ENCODE measurements at regions of chr19 and their contacts with region 1.

Region 1: DNA sequence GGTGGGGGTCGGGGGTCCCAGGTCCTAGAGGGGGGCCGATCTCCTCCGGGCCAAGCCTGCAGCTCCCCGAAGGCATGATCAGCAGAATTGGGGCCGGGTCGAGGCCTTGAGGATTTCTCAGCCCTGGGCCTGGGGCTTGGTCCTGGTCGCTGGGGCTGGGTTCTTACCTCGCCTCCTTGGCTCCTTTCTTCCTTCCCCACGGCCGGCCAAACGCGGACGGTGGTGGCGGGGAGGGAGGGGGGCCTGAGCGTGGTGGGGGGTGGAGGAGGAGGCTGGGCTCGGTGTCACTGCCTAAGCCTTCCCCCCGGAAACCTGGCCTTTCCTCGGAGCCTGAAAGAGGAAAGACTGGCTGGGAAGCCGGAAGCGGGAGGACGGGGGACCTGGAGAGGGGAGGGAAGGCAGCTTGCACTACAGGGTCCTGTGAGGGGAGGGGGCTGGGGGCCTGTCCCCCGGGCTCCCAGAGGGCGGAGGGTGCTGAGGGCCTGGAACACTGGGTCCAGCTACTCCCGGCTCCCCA is at the start of gene ZNF579:
- DNase-seq: peak; percentile 75 to 85
- ATAC-seq: peak; percentile 81 to 86
- H3K4me3 ChIP-seq: peak within 1 kb of the TSS; percentile 92 to 98 (median 96)
- H3K27ac ChIP-seq: peak within 1 kb of the TSS; percentile 96 to 100 (median 98)
- H3K4me1 ChIP-seq: peaks cover 3 to 19% of the 10 kb centered on the region in 2 donors
- H3K27me3 ChIP-seq: peaks cover 0 to 3% (median 0%) of the 10 kb centered on the region in 3 donors
- CTCF ChIP-seq: no peak
- POLR2A ChIP-seq: no peak
- total RNA-seq, gene ZNF579: 15.0 to 19.3 (median 16.8) TPM

Region 2: GRCh38 chr19:55563261-55563690 is 17.4 kb before region 1 on chr19:
- in situ Hi-C with region 1: no loop called
- intact Hi-C with region 1: loop called (anchors 1 kb)
- DNase-seq: peak; percentile 64 to 83
- ATAC-seq: peak; percentile 95 to 97
- H3K4me3 ChIP-seq: peak overlapping the region in 1 of 4 donors; percentile 16
- H3K27ac ChIP-seq: peak overlapping the region; percentile 79 to 93 (median 84)
- H3K4me1 ChIP-seq: peaks cover 9 to 14% of the 10 kb centered on the region in 2 donors
- H3K27me3 ChIP-seq: no peaks in the 10 kb centered on the region
- CTCF ChIP-seq: no peak
- POLR2A ChIP-seq: peak; percentile 79

Measured in gastrocnemius medialis (tissue), 4 donors.